ENCODE measurements at regions of chr13 and their contacts with region 1.

Region 1: DNA sequence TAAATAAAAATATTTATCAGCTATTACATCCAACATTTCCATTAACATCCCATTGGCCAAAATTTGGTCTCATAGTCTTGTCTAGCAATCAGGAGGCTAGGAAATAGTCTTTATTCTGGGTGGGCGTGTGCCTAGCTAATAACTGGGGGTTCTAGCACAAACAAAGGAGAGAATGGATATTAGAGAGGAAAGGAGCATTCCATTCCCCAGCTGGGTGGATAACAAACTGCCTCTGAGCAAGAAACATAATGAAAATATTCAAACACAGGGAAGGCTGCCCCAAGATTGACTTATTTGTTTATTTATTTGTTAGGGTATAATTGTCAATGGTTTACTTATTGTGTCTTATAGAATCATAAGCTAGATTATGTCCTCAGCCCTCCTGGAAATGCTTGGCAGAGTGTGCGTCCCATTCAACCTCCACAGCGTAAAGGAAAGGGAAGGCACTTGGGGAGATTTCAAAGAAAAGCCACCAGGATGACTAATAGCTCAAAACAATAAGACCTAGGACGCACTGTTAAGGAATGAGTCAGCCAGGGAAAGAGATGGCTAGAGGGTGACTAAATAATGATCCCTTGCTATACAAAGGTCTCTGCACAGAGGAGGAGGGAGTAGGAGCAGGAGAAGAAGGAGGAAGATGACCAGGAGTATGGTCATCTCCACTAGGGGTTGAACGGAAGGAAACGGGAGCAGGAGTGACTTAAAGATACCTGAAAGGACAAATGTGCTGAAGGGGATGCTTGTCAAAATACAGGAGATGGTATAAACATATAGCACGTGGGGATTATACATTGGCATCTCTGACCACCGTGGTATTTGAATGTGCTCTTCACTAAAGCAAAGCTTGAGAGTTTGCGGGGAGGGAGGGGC is 23.5 kb upstream of the USP12 start:
- DNase-seq: no peak
- ATAC-seq: no peak
- H3K4me3 Mint-ChIP-seq: no peak overlapping the region
- H3K27ac Mint-ChIP-seq: no peak overlapping the region
- H3K4me1 Mint-ChIP-seq: peaks cover 17% of the 10 kb centered on the region
- H3K27me3 Mint-ChIP-seq: peaks cover 5% of the 10 kb centered on the region
- CTCF ChIP-seq: no peak

Region 2: DNA sequence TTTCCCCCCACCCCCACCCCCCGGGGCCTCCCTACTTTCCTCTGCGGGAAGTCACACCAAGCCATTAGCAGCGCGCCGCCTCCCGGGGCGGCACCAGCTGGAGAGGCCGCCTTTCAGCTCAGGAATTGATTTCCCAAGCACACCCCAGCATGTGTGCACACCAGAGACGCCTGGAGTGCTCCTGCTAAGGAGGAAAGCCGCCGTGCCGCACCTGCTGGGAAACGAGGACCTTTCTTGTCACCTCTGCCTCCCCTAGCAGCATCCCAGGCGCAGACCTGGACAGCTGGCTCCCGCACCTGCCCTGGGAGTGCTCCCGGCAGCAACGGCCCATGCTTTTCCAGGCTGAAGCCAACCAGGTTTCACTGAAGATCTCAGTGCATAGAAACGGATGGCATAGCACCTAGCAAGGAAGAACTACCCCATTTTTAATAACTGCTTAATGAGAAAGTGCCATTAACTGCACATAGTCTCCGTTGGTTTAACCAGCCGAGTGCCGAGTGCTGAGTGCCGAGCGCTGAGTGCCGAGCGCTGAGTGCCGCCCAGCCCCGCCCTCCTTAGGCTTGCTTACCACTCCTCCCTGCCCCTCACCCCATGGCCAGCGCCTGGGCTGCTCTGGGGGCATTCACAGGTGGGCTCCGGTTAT is 188.5 kb before region 1 on chr13:
- CTCF ChIA-PET with region 1: no interaction called
- POLR2A ChIA-PET with region 1: interaction called, 10 read pairs
- intact Hi-C with region 1: no loop called
- DNase-seq: no peak
- ATAC-seq: peak; percentile 52
- H3K4me3 Mint-ChIP-seq: peak overlapping the region; percentile 56
- H3K27ac Mint-ChIP-seq: no peak overlapping the region
- H3K4me1 Mint-ChIP-seq: peaks cover 18% of the 10 kb centered on the region
- H3K27me3 Mint-ChIP-seq: peaks cover 15% of the 10 kb centered on the region
- CTCF ChIP-seq: no peak

Region 3: DNA sequence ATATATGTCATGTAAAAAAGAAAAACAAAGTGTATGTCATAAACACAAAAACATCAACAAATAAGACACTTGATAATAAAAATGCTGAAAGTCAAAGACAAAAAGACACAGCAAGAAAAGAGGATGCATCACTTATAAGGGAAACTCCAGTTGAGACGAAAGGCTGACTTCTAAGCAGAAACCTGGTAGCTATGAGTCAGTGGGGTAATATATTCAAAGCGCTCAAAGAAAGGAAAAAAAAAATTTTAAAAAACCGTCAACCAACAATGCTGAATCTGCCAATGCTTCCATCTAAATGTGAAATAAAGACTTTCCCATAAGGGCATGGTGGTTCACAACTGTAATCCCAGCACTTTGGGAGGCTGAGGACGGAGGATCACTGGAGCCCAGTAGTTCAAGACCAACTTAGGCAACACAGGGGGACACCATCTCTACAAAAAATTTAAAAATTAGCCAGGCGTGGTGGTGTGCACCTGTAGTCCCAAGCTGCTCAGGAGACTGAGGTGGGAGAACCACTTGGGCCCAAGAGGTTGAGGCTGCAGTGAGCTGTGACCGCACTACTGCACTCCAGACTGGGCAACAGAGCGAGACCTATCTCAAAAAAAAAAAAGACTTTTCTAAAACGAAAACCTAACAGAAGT is 47.5 kb before region 1 on chr13:
- CTCF ChIA-PET with region 1: no interaction called
- POLR2A ChIA-PET with region 1: interaction called, 4 read pairs
- intact Hi-C with region 1: loop called (anchors 1 kb)
- DNase-seq: peak; percentile 48
- ATAC-seq: peak; percentile 90
- H3K4me3 Mint-ChIP-seq: peak overlapping the region; percentile 81
- H3K27ac Mint-ChIP-seq: peak overlapping the region; percentile 99
- H3K4me1 Mint-ChIP-seq: peaks cover 92% of the 10 kb centered on the region
- H3K27me3 Mint-ChIP-seq: no peaks in the 10 kb centered on the region
- CTCF ChIP-seq: no peak

Region 4: DNA sequence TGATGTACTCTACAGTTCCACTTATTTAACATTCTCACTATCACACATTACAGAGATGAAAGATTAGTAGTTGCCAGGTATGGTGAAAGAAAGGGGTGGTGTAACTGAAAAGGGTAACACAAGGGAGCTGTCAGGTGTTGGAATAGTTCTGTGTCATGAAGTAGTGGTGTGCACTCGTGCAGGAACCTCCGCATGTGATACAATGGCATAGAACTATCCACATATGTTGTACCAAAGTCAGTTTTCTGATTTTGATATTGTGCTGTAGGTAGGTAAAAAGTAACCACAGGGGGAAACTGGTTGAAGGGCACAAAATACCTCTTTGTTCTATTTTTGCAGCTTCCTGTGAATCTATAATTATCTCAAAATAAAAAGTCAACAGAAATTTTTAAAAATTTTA is 31.9 kb after region 1 on chr13:
- CTCF ChIA-PET with region 1: no interaction called
- POLR2A ChIA-PET with region 1: no interaction called
- intact Hi-C with region 1: loop called (anchors 5 kb)
- DNase-seq: no peak
- ATAC-seq: peak; percentile 35
- H3K4me3 Mint-ChIP-seq: peak overlapping the region; percentile 36
- H3K27ac Mint-ChIP-seq: peak overlapping the region; percentile 32
- H3K4me1 Mint-ChIP-seq: peaks cover 67% of the 10 kb centered on the region
- H3K27me3 Mint-ChIP-seq: no peaks in the 10 kb centered on the region
- CTCF ChIP-seq: no peak